MCF 10A (cell line): ENCODE measurements at regions of chr19 and their contacts with region 1.

Region 1: GRCh38 chr19:57578487-57579205 is at the start of gene ZNF416:
- DNase-seq: peak; percentile 99
- H3K4me3 Mint-ChIP-seq: peak within 1 kb of the TSS; percentile 75
- H3K27ac Mint-ChIP-seq: peak within 1 kb of the TSS; percentile 62
- H3K4me1 Mint-ChIP-seq: peaks cover 17% of the 10 kb centered on the region
- H3K27me3 Mint-ChIP-seq: no peaks in the 10 kb centered on the region
- CTCF ChIP-seq: no peak
- total RNA-seq, gene ZNF416: 5.0 and 5.6 TPM in 2 replicates

Region 2: DNA sequence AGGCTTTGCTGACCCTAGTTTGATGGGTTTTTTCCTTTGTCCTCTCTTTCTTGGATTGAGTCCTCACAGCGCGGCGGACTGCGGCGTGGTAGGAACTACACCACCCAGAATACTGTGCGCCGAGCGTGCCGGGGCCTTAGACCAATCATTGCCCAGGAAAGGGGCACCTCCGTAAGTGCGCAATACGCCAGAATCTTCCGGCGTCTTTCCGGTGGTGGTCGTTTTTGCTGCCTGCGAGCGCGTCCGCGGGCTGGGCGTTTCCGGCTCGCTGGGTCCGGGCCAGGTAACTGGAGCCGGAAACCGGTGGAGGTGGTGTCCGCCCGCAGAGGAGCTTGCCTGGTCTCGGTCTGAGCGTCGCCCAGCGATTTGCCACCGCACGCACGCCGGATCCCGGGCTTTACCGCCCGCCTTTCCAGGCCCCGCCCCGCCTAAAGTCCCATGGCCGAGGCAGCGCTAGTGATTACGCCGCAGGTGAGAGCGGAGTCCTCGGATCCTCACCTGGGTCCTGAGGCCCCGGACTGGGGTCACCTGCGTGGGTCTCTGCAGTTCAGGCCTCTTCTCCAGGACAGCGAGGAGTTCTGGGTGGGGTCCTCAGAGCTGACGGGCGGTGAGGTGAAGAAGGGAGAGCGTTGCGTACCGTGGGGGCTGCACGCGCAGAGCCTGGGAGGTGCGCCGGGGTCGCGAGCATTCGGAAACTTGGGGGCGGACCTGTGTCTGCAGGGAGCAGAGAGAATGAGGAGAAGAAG is 51.3 kb before region 1 on chr19 and contains the start of gene ZNF549:
- CTCF ChIA-PET with region 1: no interaction called
- POLR2A ChIA-PET with region 1: no interaction called
- intact Hi-C with region 1: no loop called
- DNase-seq: peak; percentile 93
- H3K4me3 Mint-ChIP-seq: peak within 1 kb of the TSS; percentile 92
- H3K27ac Mint-ChIP-seq: peak within 1 kb of the TSS; percentile 74
- H3K4me1 Mint-ChIP-seq: peaks cover 17% of the 10 kb centered on the region
- H3K27me3 Mint-ChIP-seq: no peaks in the 10 kb centered on the region
- CTCF ChIP-seq: no peak
- total RNA-seq, gene ZNF549: 3.9 and 5.3 TPM in 2 replicates

Region 3: GRCh38 chr19:57599761-57600383 is 21.2 kb after region 1 on chr19 and contains the start of gene ZNF530:
- CTCF ChIA-PET with region 1: interaction called, 5 read pairs
- POLR2A ChIA-PET with region 1: interaction called, 9 read pairs
- intact Hi-C with region 1: loop called (anchors 2 kb)
- DNase-seq: peak; percentile 97
- H3K4me3 Mint-ChIP-seq: peak within 1 kb of the TSS; percentile 79
- H3K27ac Mint-ChIP-seq: peak within 1 kb of the TSS; percentile 71
- H3K4me1 Mint-ChIP-seq: peaks cover 8% of the 10 kb centered on the region
- H3K27me3 Mint-ChIP-seq: no peaks in the 10 kb centered on the region
- CTCF ChIP-seq: no peak
- total RNA-seq, gene ZNF530: 2.4 and 2.8 TPM in 2 replicates

Region 4: DNA sequence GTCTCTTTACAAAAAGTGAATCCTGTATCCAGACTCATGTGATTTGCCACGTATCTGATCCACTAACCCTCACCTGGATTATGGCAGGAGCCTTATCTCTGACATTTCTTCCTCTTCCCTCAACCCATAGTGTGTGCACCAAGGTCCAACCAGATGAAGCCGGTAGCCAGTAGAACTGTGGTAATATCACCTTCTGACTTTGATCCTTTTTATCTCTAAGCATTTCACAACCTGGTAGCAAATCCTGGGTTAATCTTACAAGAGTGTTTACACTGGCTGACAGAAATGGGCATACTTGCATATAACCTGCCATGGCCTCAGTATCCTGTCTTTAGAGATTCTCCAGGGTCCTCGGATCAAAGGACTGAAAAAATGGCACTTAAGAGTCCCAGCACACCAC is 335.9 kb after region 1 on chr19:
- CTCF ChIA-PET with region 1: no interaction called
- POLR2A ChIA-PET with region 1: no interaction called
- intact Hi-C with region 1: loop called (anchors 10 kb)
- DNase-seq: no peak
- H3K4me3 Mint-ChIP-seq: peak overlapping the region; percentile 93
- H3K27ac Mint-ChIP-seq: no peak overlapping the region
- H3K4me1 Mint-ChIP-seq: peaks cover 9% of the 10 kb centered on the region
- H3K27me3 Mint-ChIP-seq: no peaks in the 10 kb centered on the region
- CTCF ChIP-seq: no peak